ENCODE measurements at regions of chr2 and their contacts with region 1.

Region 1: DNA sequence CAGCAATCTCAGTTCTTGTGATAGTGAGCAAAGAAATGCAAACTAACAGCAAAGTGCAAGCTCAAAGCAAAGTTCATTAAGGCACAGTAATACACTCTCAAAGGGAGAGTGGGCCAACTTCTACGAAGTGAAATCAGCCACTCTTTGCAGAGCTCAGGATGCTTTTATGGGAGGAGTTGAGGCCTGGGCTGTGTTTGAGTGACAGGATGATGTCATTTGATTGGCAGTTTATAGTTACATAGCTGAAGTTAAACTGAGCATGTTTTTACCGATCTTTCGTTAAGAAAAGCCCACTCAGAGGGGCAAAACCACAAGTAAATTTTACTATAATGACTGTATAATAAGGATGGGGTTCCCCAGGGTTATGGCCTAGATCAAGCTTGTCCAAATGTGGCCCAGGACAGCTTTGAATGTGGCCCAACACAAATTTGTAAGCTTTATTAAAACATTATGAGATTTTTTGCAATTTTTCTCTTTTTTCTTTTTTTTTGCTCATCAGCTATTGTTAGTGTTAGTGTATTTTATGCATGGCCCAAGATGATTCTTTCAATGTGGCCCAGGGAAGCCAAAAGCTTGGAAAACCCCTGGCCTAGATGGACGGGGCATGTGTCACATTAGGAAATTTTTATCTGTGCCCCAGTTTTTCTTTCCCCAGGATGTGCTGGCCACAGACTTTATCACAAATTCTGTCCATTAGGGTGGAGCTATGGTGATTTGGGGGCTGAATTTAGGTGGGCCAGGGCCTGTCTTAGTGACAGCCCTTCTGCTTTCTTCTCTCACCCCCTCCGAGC is 8.3 kb upstream of the DNAH7 start:
- DNase-seq: no peak
- H3K4me3 ChIP-seq: no peak overlapping the region
- H3K27ac ChIP-seq: no peak overlapping the region
- H3K4me1 ChIP-seq: no peaks in the 10 kb centered on the region
- H3K27me3 ChIP-seq: no peaks in the 10 kb centered on the region
- CTCF ChIP-seq: no peak
- POLR2A ChIP-seq: no peak

Region 2: DNA sequence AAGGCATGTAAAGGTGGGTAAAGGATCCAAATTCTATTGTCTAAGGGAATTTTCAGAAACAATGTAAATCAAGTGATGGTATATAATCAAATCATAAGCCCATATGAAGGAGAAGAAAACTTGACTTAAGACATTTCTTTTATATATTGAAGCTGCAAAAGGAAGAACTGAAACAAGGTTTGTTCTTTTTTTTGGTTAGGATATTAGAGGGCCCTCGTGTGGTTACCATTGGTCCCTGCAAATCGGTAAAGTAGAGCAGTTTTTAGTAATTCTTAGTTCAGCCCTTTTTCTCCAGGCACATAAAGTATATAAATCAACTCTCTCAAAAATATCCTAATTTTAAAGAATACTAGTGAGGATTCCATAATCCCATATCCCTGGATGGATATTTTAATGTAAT is 200.0 kb after region 1 on chr2:
- intact Hi-C with region 1: loop called (anchors 10 kb)
- DNase-seq: no peak
- H3K4me3 ChIP-seq: no peak overlapping the region
- H3K27ac ChIP-seq: no peak overlapping the region
- H3K4me1 ChIP-seq: peaks cover 8 to 37% (median 20%) of the 10 kb centered on the region in 3 donors
- H3K27me3 ChIP-seq: no peaks in the 10 kb centered on the region
- CTCF ChIP-seq: peak; percentile 37 to 78 (median 48)
- POLR2A ChIP-seq: no peak

Region 3: DNA sequence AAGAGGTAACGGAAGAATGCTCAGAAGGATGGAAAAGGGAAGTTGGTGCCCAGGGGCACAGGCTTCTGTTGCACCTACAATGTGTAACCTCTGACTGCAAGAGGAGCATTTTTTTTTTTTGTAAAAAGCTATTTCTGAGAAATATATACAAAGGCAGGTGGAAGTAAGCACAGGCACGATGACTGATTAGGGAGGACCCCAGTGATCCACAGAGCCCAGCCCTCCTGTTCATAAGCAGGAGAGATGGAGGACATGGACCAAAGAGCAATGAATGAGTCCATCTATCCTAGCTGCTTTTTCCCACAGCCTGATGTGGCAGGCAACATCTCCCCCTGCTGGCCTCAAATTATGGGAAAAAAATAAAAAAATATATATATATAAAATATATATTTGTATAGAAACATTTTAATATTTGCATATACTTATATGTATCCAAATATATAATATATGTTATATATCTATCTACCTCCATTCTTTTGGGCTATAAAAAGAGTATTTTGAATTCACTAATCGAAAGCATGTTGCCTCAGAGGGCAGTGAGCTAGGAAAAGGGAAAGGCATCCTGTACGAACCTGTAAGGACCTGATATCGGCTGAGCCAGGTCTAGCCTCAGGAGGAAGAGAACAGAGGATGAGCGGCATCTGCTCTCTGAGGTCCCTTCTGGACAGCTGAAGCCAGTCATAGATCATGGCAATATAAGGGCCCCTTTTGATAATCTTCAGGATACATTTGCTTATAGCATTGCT is 260.4 kb after region 1 on chr2:
- intact Hi-C with region 1: loop called (anchors 10 kb)
- DNase-seq: no peak
- H3K4me3 ChIP-seq: no peak overlapping the region
- H3K27ac ChIP-seq: no peak overlapping the region
- H3K4me1 ChIP-seq: no peaks in the 10 kb centered on the region
- H3K27me3 ChIP-seq: no peaks in the 10 kb centered on the region
- CTCF ChIP-seq: peak in 5 of 6 experiments; percentile 19 to 53 (median 29)
- POLR2A ChIP-seq: no peak

Region 4: DNA sequence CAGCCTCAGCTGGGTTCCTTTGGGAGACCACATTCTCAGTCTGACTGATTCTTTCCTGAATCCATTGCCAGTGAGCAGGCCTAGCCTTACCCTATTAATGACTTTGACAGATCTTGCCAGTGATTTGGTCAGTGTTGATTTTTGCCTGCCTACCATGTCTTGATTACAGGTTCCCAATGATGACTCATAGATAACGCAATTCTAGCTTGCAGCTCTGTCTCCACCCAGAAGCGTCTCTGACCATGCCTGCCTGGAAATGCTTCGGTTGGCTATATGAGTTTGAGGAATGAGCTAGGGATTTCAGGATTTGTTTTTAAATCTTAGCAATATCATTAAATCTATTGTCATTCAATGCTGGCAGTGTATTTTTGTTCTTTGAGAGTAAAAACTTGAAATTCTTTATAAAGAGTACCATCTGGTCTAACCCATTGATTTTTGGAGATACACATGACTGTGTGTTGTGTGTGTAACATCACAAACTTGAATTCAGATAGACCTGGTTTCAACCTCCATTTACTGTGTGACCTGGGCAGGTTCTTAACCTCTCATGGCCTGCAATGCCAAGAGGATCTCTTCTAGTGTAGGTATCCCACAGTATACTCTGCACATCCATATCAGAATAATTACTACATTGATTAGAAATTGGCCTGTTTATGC is 619.6 kb after region 1 on chr2:
- intact Hi-C with region 1: no loop called
- DNase-seq: no peak
- H3K4me3 ChIP-seq: no peak overlapping the region
- H3K27ac ChIP-seq: no peak overlapping the region
- H3K4me1 ChIP-seq: peaks cover 0 to 8% (median 0%) of the 10 kb centered on the region in 3 donors
- H3K27me3 ChIP-seq: no peaks in the 10 kb centered on the region
- CTCF ChIP-seq: no peak
- POLR2A ChIP-seq: no peak